PC-3 (cell line): ENCODE measurements at regions of chr20 and their contacts with region 1.

Region 1: GRCh38 chr20:52761867-52762266 is 210.3 kb upstream of the TSHZ2 start:
- DNase-seq: no peak
- ATAC-seq: no peak
- H3K4me3 ChIP-seq: no peak overlapping the region
- H3K27ac ChIP-seq: no peak overlapping the region
- H3K4me1 ChIP-seq: no peaks in the 10 kb centered on the region
- H3K27me3 ChIP-seq: no peaks in the 10 kb centered on the region
- CTCF ChIP-seq: no peak

Region 2: GRCh38 chr20:52564637-52565036 is 197.2 kb before region 1 on chr20:
- CTCF ChIA-PET with region 1: no interaction called
- POLR2A ChIA-PET with region 1: no interaction called
- intact Hi-C with region 1: no loop called
- DNase-seq: no peak
- ATAC-seq: no peak
- H3K4me3 ChIP-seq: no peak overlapping the region
- H3K27ac ChIP-seq: no peak overlapping the region
- H3K4me1 ChIP-seq: no peaks in the 10 kb centered on the region
- H3K27me3 ChIP-seq: no peaks in the 10 kb centered on the region
- CTCF ChIP-seq: no peak

Region 3: GRCh38 chr20:52665441-52665840 is 96.4 kb before region 1 on chr20:
- CTCF ChIA-PET with region 1: no interaction called
- POLR2A ChIA-PET with region 1: interaction called, 18 read pairs
- intact Hi-C with region 1: no loop called
- DNase-seq: no peak
- ATAC-seq: no peak
- H3K4me3 ChIP-seq: no peak overlapping the region
- H3K27ac ChIP-seq: no peak overlapping the region
- H3K4me1 ChIP-seq: no peaks in the 10 kb centered on the region
- H3K27me3 ChIP-seq: no peaks in the 10 kb centered on the region
- CTCF ChIP-seq: no peak

Region 4: GRCh38 chr20:53387983-53388675 is 626.3 kb after region 1 on chr20:
- CTCF ChIA-PET with region 1: no interaction called
- POLR2A ChIA-PET with region 1: no interaction called
- intact Hi-C with region 1: no loop called
- DNase-seq: no peak
- ATAC-seq: no peak
- H3K4me3 ChIP-seq: no peak overlapping the region
- H3K27ac ChIP-seq: no peak overlapping the region
- H3K4me1 ChIP-seq: no peaks in the 10 kb centered on the region
- H3K27me3 ChIP-seq: peaks cover 75% of the 10 kb centered on the region
- CTCF ChIP-seq: no peak